ENCODE measurements at regions of chr9 and their contacts with region 1.

Region 1: GRCh38 chr9:131334629-131335367 is 45.3 kb downstream of the PLPP7 start:
- DNase-seq: no peak
- ATAC-seq: peak in 1 of 2 experiments; percentile 14; a peak in 1 of 6 replicates
- H3K4me3 ChIP-seq: no peak overlapping the region
- H3K27ac ChIP-seq: peak overlapping the region in 1 of 2 experiments; percentile 48; a peak in 1 of 6 replicates
- H3K4me1 ChIP-seq: no peaks in the 10 kb centered on the region
- CTCF ChIP-seq: no peak
- EP300 ChIP-seq: no peak
- POLR2A ChIP-seq: no peak
- RAD21 ChIP-seq: no peak

Region 2: GRCh38 chr9:131046581-131047202 is 288.1 kb before region 1 on chr9:
- CTCF ChIA-PET with region 1: interaction called, 17 read pairs
- POLR2A ChIA-PET with region 1: no interaction called
- DNase-seq: peak; percentile 65 to 69
- ATAC-seq: peak; percentile 83 to 96
- H3K4me3 ChIP-seq: no peak overlapping the region
- H3K27ac ChIP-seq: no peak overlapping the region
- H3K4me1 ChIP-seq: no peaks in the 10 kb centered on the region
- CTCF ChIP-seq: peak; percentile 95
- EP300 ChIP-seq: no peak
- POLR2A ChIP-seq: no peak
- RAD21 ChIP-seq: peak; percentile 89 to 94

Region 3: GRCh38 chr9:131167146-131167692 is 167.6 kb before region 1 on chr9:
- CTCF ChIA-PET with region 1: interaction called, 21 read pairs
- POLR2A ChIA-PET with region 1: no interaction called
- DNase-seq: no peak
- ATAC-seq: no peak
- H3K4me3 ChIP-seq: no peak overlapping the region
- H3K27ac ChIP-seq: no peak overlapping the region
- H3K4me1 ChIP-seq: no peaks in the 10 kb centered on the region
- CTCF ChIP-seq: no peak
- EP300 ChIP-seq: no peak
- POLR2A ChIP-seq: no peak
- RAD21 ChIP-seq: no peak

Region 4: DNA sequence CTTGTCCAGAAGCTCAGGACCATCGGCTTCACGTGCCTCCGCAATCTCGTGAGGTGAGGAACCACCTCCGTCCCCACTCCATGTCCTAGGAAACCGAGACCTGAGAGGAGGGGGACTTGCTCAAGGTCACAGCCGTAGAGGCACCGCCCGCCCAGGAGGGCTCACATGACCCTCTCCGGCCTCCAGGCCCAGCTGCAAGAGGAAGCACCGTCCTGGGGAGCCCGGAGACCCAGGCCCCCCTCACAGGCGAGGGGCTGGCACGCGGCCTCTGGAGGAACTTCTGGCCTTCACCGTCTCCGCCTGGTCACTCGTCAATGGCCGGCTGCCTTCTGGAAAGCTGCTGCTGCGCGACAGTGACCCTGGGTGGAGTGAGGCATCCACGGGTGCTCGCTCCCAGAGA is 82.7 kb before region 1 on chr9:
- CTCF ChIA-PET with region 1: interaction called, 11 read pairs
- POLR2A ChIA-PET with region 1: interaction called, 4 read pairs
- DNase-seq: no peak
- ATAC-seq: no peak
- H3K4me3 ChIP-seq: no peak overlapping the region
- H3K27ac ChIP-seq: no peak overlapping the region
- H3K4me1 ChIP-seq: peaks cover 8% of the 10 kb centered on the region
- CTCF ChIP-seq: no peak
- EP300 ChIP-seq: no peak
- POLR2A ChIP-seq: no peak
- RAD21 ChIP-seq: no peak

Region 5: GRCh38 chr9:131291795-131292315 is 42.9 kb before region 1 on chr9:
- CTCF ChIA-PET with region 1: interaction called, 28 read pairs
- POLR2A ChIA-PET with region 1: no interaction called
- DNase-seq: no peak
- ATAC-seq: no peak
- H3K4me3 ChIP-seq: no peak overlapping the region
- H3K27ac ChIP-seq: no peak overlapping the region
- H3K4me1 ChIP-seq: no peaks in the 10 kb centered on the region
- CTCF ChIP-seq: no peak
- EP300 ChIP-seq: no peak
- POLR2A ChIP-seq: no peak
- RAD21 ChIP-seq: no peak

Region 6: GRCh38 chr9:131320031-131320685 is 14.6 kb before region 1 on chr9:
- CTCF ChIA-PET with region 1: interaction called, 127 read pairs
- POLR2A ChIA-PET with region 1: no interaction called
- DNase-seq: no peak
- ATAC-seq: no peak; a peak in 1 of 6 replicates
- H3K4me3 ChIP-seq: no peak overlapping the region
- H3K27ac ChIP-seq: no peak overlapping the region
- H3K4me1 ChIP-seq: peaks cover 14% of the 10 kb centered on the region; the same call in 2 of the 3 replicates
- CTCF ChIP-seq: no peak
- EP300 ChIP-seq: no peak
- POLR2A ChIP-seq: no peak
- RAD21 ChIP-seq: no peak

Region 7: DNA sequence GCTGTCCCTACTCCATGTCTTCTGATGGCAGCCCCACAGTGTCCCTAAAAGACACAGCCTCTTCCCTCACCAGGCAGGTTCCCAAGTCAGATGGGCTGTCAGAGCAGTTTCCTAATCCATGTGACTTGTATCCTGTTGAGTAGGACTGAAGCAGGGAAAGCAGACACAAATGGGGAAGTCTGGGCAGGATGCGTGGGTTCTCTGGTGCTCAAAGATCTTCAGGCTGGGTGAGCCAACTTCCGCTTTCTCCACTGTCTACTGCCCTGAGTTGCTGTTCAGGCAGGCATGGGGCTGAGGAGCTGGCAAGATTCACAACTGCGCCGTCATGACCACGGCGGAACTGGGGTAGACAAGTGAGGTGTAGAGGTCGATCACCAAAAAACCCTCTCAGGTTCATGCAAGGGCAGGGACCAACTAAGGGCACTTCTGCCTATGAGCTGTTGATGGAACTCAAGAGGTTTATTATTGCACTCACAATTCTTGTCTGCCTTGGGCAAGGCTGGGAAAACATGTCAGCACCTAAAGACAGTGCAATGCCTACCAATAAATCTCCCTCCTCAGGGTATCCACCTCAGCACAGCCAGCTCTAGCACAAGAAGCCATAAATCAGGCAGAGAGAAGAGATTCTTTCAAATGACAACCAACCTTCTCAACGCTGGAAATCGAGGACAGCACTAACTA is 321.7 kb after region 1 on chr9:
- CTCF ChIA-PET with region 1: no interaction called
- POLR2A ChIA-PET with region 1: no interaction called
- DNase-seq: no peak
- ATAC-seq: no peak
- H3K4me3 ChIP-seq: no peak overlapping the region
- H3K27ac ChIP-seq: peak overlapping the region in 1 of 2 experiments; percentile 78; a peak in 3 of 6 replicates
- H3K4me1 ChIP-seq: peaks cover 41% of the 10 kb centered on the region
- CTCF ChIP-seq: no peak
- EP300 ChIP-seq: no peak
- POLR2A ChIP-seq: no peak
- RAD21 ChIP-seq: no peak

Measured in A549 (cell line).